WTC11 (cell line): ENCODE measurements at regions of chr3 and their contacts with region 1.

Region 1: DNA sequence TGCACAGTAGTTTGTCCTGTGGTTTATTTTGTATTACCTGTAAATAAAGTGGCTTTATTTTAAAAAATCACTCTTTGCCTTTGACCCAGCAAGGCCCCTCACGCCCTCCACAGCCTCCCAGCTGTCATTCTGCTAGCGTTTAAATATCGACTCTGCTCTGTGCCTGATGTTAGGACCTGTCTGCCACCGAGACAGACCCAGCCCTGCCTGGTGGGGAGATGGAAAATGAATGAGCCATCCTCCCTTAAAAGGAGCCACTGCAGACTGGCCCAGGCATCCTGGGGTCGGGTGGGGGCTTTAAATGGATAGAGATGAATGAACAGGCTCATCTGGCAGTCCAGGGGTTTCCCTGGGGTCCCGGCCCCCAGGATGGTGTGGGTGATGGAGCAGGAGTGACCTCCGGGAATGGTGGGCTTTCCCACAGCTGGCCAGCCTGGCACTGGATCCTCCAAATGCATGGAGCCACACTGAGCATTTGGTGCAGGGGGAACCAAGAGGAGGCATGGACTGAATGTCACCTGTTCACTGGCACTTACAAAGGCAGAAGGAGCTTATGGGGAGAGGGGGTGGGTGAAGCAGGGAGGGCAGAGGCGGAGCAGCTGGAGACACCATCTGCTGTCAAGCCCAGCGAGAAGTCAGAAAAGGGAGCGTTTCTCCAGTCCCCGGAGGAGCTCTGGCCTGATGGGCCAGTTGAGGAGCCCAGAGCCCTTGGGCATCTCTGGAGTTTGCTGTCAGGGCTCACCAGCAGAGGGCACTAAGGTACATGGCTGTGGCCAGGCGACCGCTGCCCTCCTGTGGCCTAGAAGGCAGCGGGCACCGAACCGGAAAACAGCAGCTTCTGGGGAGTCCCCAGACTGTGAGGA is 11.9 kb downstream of the GRM2 start:
- DNase-seq: peak; percentile 92
- ATAC-seq: peak; percentile 87
- H3K4me3 Mint-ChIP-seq: no peak overlapping the region
- H3K27ac Mint-ChIP-seq: no peak overlapping the region
- H3K4me1 Mint-ChIP-seq: peaks cover 16% of the 10 kb centered on the region
- H3K27me3 Mint-ChIP-seq: peaks cover 3% of the 10 kb centered on the region; the same call in 1 of the 2 replicates
- CTCF ChIP-seq: peak; percentile 60

Region 2: GRCh38 chr3:51538459-51539290 is 180.1 kb before region 1 on chr3 and contains the start of gene RAD54L2:
- CTCF ChIA-PET with region 1: no interaction called
- POLR2A ChIA-PET with region 1: no interaction called
- DNase-seq: peak; percentile 85
- ATAC-seq: peak; percentile 82
- H3K4me3 Mint-ChIP-seq: peak within 1 kb of the TSS; percentile 89
- H3K27ac Mint-ChIP-seq: peak within 1 kb of the TSS; percentile 75
- H3K4me1 Mint-ChIP-seq: peaks cover 15% of the 10 kb centered on the region
- H3K27me3 Mint-ChIP-seq: no peaks in the 10 kb centered on the region
- CTCF ChIP-seq: no peak
- total RNA-seq, gene RAD54L2: 29.5 to 32.3 TPM (median 30.9 TPM) in 3 replicates

Region 3: GRCh38 chr3:51670823-51671733 is 47.7 kb before region 1 on chr3 and contains the start of gene TEX264:
- CTCF ChIA-PET with region 1: interaction called, 15 read pairs
- POLR2A ChIA-PET with region 1: no interaction called
- DNase-seq: peak; percentile 58
- ATAC-seq: peak; percentile 28
- H3K4me3 Mint-ChIP-seq: peak within 1 kb of the TSS; percentile 75
- H3K27ac Mint-ChIP-seq: peak within 1 kb of the TSS; percentile 46
- H3K4me1 Mint-ChIP-seq: peaks cover 35% of the 10 kb centered on the region
- H3K27me3 Mint-ChIP-seq: no peaks in the 10 kb centered on the region; the same call in 1 of the 2 replicates
- CTCF ChIP-seq: no peak
- total RNA-seq, gene TEX264: 11.8 to 17.5 TPM (median 17.5 TPM) in 3 replicates

Region 4: DNA sequence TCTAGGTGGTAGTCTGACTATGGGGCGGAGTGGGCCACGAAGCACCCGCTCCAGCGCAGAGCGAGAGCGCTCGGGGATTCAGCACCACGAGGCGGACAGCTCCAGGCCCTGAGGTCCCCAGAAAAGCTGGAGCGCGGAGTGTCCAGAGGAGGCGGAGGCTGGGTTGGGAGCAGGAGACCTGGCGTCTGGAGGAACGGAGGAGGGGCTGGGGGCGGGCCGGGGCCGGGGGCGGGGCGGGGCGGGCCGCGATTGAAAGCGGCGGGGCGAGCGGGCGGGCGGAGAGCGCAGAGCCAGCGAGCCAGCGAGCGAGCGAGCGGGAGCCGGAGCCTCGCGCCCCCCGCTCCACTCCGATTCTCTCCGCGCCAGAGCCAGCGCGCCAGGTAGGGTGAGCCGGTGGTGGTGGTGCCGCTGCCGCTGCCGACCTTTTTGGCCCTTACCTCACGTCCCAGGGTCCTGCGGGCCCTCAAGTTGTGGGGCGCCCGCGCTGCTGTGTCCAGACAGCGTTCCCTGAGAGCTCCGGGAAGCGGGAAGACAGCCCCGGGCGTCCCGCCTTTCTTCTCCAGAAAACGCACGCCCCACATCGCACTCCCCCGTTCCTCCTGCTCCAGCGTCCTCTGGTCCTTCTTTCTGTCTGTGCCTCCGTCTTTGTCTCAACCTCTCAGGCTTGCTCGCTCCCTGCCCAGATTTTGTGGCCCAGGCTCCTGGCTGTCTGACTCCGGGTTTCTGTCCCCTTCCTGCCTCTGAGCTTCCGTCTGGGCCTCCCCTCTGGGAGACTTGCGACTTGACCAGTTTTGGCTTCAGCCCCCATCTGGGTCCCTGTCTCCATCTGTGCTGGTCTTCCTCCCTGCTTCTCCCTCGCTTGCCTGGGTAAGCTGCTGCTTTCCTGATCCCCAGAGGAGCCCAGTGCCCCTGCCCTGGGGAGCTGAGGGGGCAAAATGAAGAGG is 11.7 kb before region 1 on chr3 and contains the start of gene GRM2:
- CTCF ChIA-PET with region 1: interaction called, 139 read pairs
- POLR2A ChIA-PET with region 1: no interaction called
- DNase-seq: peak; percentile 93
- ATAC-seq: peak; percentile 76
- H3K4me3 Mint-ChIP-seq: peak within 1 kb of the TSS; percentile 92
- H3K27ac Mint-ChIP-seq: no peak within 1 kb of the TSS
- H3K4me1 Mint-ChIP-seq: peaks cover 29% of the 10 kb centered on the region
- H3K27me3 Mint-ChIP-seq: peaks cover 28% of the 10 kb centered on the region
- CTCF ChIP-seq: no peak
- total RNA-seq, gene GRM2: 2.8 to 4.1 TPM (median 3.7 TPM) in 3 replicates

Region 5: DNA sequence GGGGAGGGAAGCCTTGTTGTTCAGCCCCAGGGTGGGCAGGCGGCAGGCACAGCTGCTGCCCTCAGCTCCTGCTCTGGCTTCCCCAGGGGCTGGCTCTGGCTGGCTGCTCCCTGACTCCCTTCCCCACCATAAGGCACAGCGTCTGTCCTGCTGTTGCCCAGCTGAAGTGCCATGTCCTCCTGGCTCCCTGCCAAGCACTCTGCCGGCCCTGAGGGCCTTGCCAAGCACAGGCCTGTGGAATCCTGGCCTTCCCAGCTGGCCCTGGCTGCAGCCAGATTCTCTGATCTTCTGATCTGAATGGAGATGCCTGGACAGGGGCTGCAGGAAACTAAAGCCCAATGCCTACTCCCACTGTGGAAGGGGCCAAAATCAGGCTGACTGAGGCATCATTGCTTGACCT is 59.2 kb after region 1 on chr3:
- CTCF ChIA-PET with region 1: interaction called, 13 read pairs
- POLR2A ChIA-PET with region 1: no interaction called
- DNase-seq: no peak
- ATAC-seq: no peak
- H3K4me3 Mint-ChIP-seq: no peak overlapping the region
- H3K27ac Mint-ChIP-seq: no peak overlapping the region
- H3K4me1 Mint-ChIP-seq: peaks cover 11% of the 10 kb centered on the region
- H3K27me3 Mint-ChIP-seq: no peaks in the 10 kb centered on the region; the same call in 1 of the 2 replicates
- CTCF ChIP-seq: no peak

Region 6: DNA sequence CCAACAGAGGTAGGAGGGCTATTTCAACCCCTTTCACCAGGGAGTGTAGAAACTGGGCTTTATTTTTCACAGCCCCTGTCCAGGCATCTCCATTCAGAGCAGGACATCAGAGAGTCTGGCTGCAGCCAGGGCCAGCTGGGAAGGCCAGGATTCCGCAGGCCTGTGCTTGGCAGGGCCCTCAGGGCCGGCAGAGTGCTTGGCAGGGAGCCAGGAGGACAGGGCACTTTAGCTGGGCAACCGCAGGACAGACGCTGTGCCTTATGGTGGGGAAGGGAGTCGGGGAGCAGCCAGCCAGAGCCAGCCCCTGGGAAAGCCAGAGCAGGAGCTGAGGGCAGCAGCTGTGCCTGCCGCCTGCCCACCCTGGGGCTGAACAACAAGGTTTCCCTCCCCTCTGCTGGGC is 94.8 kb after region 1 on chr3:
- CTCF ChIA-PET with region 1: interaction called, 99 read pairs
- POLR2A ChIA-PET with region 1: no interaction called
- DNase-seq: no peak
- ATAC-seq: no peak
- H3K4me3 Mint-ChIP-seq: no peak overlapping the region
- H3K27ac Mint-ChIP-seq: no peak overlapping the region
- H3K4me1 Mint-ChIP-seq: no peaks in the 10 kb centered on the region
- H3K27me3 Mint-ChIP-seq: peaks cover 6% of the 10 kb centered on the region
- CTCF ChIP-seq: no peak

Region 7: DNA sequence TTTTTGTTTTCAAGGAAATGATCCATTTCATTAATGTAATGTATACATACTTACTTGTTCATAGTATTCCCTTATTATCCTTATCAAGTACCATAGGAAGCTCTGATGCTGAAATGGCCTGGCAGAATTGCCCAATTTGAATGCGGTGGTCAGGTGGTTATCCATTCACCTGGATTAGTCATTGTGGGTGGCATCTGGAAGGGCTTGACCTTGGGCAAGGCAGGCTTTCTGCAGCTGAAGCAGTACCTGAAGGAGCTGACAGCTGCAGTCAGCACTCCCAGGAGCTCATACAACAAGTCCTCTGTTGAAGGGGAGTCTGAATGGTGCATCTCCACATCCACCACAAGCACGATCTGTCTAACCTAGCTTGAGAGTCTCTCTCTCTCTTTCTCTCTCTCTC is 168.8 kb after region 1 on chr3:
- CTCF ChIA-PET with region 1: interaction called, 15 read pairs
- POLR2A ChIA-PET with region 1: no interaction called
- DNase-seq: no peak
- ATAC-seq: no peak
- H3K4me3 Mint-ChIP-seq: no peak overlapping the region
- H3K27ac Mint-ChIP-seq: no peak overlapping the region
- H3K4me1 Mint-ChIP-seq: 0 out of 2 replicates have a peak, but pooled peaks cover 2% of the 10 kb centered on the region
- H3K27me3 Mint-ChIP-seq: no peaks in the 10 kb centered on the region; the same call in none of the 2 replicates
- CTCF ChIP-seq: no peak